GM10248 (cell line): ENCODE measurements at regions of chr16 and their contacts with region 1.

Region 1: DNA sequence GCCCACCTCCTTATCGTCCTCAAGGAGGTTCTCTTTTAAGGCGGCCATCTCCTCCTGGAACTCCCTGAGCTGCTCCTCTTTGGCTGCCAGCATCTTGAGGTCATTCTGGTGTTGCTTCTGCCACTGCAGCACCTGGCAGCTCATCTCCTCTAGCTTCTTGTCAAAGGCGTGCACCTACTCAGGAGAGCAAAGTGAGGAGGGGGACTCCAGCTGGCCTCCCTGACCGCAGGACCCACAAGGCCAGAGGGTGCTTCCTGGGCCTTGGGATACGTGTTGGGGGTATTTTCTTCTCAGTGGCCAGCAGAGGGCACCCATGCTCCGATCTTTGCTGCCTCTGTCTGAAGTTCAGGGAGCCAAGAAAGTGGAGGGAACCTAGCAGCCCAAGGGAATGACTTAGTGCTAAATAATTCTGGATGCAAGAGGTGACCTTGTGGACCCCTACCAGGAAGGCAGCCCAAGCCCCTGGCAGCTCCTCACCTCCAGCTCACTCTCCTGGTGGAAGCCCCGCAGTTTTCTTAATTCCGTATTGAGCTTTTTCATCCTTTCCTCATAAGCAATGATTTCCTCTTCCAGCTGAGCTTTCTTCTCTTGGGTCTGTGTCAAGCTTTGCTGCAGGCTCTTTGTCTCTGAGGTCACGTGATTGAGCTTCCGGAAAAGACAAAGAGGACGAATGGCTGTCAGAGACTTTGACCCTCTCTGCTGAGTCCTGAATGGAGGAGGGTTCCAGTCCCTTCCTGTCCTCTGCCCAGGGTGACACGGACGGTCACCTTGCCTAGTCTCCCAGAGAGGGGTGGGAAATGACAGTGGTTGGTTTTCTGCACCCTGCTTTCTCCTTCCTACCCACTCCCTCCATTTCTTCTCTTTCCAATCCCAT is 31.4 kb downstream of the DHX38 start:
- DNase-seq: peak; percentile 81
- CTCF ChIP-seq: peak; percentile 82

Region 2: GRCh38 chr16:71927383-71927782 is 197.6 kb before region 1 on chr16:
- CTCF ChIA-PET with region 1: no interaction called
- POLR2A ChIA-PET with region 1: no interaction called
- DNase-seq: no peak
- CTCF ChIP-seq: no peak

Region 3: GRCh38 chr16:72111657-72112451 is 13.1 kb before region 1 on chr16:
- CTCF ChIA-PET with region 1: interaction called, 10 read pairs
- POLR2A ChIA-PET with region 1: no interaction called
- DNase-seq: peak; percentile 14
- CTCF ChIP-seq: no peak

Region 4: DNA sequence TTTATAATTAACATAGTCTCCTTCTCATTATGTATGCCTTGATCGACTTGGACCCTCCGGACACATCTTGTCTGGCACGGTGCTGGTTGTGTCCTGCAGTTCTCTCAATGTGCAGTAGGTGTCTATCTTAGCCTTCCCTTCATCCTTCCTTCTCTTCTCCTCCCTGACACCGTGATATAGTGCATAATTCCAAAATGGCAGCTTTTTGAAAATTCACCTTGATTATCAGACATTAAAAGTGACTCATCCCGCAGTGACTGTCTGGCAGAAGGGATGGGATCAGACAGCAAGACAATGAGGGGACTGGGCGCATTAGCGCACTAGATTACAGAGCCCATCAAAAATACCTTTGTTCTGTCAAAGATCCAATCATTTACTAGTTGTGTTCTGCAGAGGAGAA is 116.9 kb after region 1 on chr16:
- CTCF ChIA-PET with region 1: no interaction called
- POLR2A ChIA-PET with region 1: no interaction called
- DNase-seq: no peak
- CTCF ChIP-seq: peak; percentile 34

Region 5: DNA sequence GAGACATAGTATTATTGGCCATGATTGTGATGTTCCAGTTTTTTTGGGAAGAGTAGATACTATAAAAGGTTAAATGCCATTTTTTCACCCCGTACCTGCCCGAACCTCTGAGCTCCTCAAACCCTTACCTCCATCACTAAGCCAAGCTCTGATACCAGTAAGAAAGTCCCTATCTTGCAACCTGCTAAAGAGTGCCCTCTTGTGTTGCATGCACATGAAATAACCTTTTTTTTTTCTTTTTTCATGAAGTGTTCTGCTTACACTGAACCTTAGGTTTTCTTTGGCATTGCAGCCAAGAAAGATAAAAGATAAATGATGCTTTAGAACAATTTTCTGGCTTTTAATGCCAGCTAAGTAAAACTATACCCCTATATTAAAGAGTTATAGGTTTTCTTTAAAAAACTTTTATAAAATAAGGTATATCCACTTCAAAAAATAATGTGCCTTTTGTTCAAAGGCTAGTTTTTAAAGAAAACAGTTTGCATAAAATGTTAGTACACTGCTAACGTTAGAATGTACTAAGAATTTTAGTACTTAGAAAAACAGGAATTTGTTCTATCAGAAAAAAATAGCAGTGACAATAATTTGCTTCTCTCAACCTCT is 342.3 kb after region 1 on chr16:
- CTCF ChIA-PET with region 1: interaction called, 32 read pairs
- POLR2A ChIA-PET with region 1: no interaction called
- DNase-seq: peak; percentile 18
- CTCF ChIP-seq: peak; percentile 71

Region 6: GRCh38 chr16:72474501-72475123 is 349.6 kb after region 1 on chr16:
- CTCF ChIA-PET with region 1: interaction called, 10 read pairs
- POLR2A ChIA-PET with region 1: no interaction called
- DNase-seq: no peak
- CTCF ChIP-seq: no peak

Region 7: DNA sequence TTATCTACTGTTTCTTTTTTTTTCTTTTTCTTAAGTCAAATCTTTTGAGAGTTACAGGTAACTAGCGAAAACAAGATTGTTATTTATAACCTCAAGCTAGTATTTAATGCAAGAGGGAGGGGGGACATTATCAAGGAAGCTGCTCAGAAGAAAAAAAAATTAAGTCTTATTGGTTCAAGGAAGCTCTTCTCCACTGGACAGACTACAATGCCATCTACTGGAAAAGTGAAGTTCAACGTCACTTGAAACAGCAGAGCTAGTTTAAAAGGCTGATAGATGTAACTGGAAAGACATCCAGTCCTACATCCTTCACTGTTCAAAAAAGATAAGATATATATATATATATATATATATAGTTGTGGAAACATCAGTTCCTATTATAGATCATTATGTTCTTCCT is 1753.6 kb after region 1 on chr16:
- CTCF ChIA-PET with region 1: interaction called, 15 read pairs
- POLR2A ChIA-PET with region 1: no interaction called
- DNase-seq: peak; percentile 18
- CTCF ChIP-seq: peak; percentile 50